ENCODE measurements at regions of chr3 and their contacts with region 1.

Region 1: DNA sequence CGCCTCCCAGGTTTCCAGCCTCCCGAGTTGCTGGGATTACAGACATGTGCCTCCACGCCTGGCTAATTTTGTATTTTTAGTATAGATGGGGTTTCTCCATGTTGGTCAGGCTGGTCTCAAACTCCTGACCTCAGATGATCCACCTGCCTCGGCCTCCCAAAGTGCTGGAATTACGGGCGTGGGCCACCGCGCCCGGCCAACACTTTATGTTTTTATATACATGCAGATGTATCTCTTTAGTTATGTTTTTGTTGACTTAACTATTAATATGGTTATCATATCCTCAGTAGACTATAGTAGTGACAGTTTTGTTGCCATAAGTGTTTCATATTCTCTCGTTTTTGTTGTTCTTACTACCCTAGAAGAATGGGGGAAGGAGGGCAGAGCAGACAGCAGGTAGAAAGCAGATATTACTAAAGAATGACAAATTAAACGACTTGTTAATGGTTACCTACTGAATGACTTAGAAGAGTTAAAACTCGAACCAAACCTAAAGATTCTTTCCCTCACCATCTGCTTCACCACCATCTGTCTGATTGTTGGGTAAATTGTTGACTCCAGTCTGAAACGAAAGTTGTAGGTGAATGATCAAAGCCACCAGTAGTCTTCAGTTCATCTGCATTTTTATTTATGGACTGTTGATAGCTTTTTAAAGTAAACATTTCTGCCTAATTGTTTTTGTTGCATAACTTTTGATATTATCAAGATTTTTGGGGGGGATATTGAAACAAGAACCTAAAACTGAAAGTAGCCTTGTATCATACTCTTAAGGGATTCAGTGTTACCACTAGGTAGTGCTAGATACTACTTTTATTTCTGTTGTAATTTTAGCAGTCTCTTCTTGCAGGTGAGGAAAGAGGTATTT is 89.3 kb downstream of the RASA2 start:
- DNase-seq: no peak
- H3K4me3 ChIP-seq: peak overlapping the region in 2 of 4 donors; percentile 23 to 26
- H3K27ac ChIP-seq: peak overlapping the region in 3 of 4 donors; percentile 10 to 58 (median 44)
- H3K4me1 ChIP-seq: peaks cover 0 to 8% (median 0%) of the 10 kb centered on the region in 4 donors
- H3K27me3 ChIP-seq: no peaks in the 10 kb centered on the region
- CTCF ChIP-seq: peak; percentile 12 to 70 (median 38)
- EP300 ChIP-seq: no peak
- POLR2A ChIP-seq: no peak

Region 2: GRCh38 chr3:141644931-141645330 is 68.8 kb after region 1 on chr3:
- intact Hi-C with region 1: loop called (anchors 5 kb)
- DNase-seq: peak; percentile 87
- H3K4me3 ChIP-seq: no peak overlapping the region
- H3K27ac ChIP-seq: peak overlapping the region in 1 of 4 donors; percentile 21
- H3K4me1 ChIP-seq: peaks cover 0 to 54% (median 39%) of the 10 kb centered on the region in 4 donors
- H3K27me3 ChIP-seq: no peaks in the 10 kb centered on the region
- CTCF ChIP-seq: peak; percentile 24 to 51 (median 40)
- EP300 ChIP-seq: no peak
- POLR2A ChIP-seq: no peak

Region 3: DNA sequence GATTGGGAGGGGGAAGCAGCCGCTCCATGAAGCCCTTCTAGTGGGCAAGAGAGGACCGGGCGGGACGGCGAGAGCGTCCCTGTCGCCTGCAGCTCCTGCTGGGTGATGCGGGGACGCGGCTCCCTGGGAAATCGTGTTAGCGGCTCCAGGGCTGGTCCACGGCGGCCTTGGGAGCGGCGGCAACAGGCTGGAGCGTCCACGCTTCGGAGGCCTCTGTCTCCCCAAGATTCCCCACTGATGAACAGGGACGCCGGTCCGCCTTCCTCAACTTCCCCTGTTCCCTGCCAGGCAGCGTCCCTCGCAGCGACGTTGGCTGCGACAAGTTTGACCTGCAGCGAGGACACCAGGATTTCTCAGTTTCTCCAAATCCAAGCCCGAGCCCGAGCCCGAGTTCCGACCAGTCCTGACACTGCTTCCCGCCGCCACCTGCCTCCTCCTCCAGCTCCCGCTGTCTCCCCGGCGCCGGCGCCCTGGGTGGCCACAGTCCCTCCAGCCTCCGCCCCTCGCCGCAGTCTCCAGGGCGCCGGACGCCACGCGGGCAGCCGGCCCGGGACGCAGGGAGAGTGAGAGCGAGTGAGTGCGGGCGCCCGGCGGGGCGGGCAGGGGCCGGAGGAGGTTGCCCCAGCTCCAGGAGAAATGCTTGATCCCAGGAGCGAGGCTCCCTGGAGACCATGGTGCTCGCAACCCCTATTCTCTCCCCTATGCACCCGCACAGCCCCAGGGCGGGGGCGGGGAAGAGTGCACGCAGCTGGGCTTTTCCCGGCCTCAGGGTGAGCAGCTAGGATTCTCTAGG is 83.9 kb after region 1 on chr3:
- intact Hi-C with region 1: loop called (anchors 5 kb)
- DNase-seq: peak; percentile 90
- H3K4me3 ChIP-seq: peak overlapping the region; percentile 53 to 73 (median 58)
- H3K27ac ChIP-seq: peak overlapping the region; percentile 64 to 94 (median 88)
- H3K4me1 ChIP-seq: peaks cover 0 to 52% (median 42%) of the 10 kb centered on the region in 4 donors
- H3K27me3 ChIP-seq: no peaks in the 10 kb centered on the region
- CTCF ChIP-seq: no peak
- EP300 ChIP-seq: no peak
- POLR2A ChIP-seq: peak; percentile 73 to 83

Region 4: GRCh38 chr3:141913150-141913811 is 337.2 kb after region 1 on chr3:
- intact Hi-C with region 1: loop called (anchors 2 kb)
- DNase-seq: no peak
- H3K4me3 ChIP-seq: no peak overlapping the region
- H3K27ac ChIP-seq: no peak overlapping the region
- H3K4me1 ChIP-seq: no peaks in the 10 kb centered on the region
- H3K27me3 ChIP-seq: no peaks in the 10 kb centered on the region
- CTCF ChIP-seq: peak; percentile 5 to 59 (median 51)
- EP300 ChIP-seq: no peak
- POLR2A ChIP-seq: no peak

Measured in sigmoid colon (tissue), 7 donors.